Activated CD8-positive, alpha-beta T cell treated with anti-CD3 and anti-CD28 coated beads for 36 hours (primary cell): ENCODE measurements at regions of chr10 and their contacts with region 1.

Region 1: DNA sequence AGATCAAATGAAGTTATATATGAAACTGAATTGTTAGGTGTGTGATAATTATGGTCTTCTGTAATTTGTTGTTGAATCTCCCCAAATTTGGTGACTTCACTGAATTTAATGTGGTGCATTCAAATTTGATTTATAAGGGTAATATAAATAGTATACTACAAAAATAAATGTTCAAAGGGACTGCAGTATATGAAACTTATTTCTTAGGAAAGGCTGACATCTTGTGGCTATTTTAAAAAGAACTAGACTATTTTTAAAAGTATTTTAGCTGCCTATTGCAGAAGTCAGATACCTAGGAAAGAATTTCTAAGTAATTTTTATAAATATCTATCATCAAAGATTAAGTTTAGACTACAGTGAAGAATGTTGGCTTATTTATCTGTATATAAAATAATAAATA is 36.6 kb downstream of the ATRNL1 start:
- DNase-seq: no peak
- ATAC-seq: no peak
- H3K4me3 Mint-ChIP-seq: no peak overlapping the region
- H3K27ac Mint-ChIP-seq: no peak overlapping the region
- H3K4me1 Mint-ChIP-seq: no peaks in the 10 kb centered on the region
- H3K27me3 Mint-ChIP-seq: peaks cover 7% of the 10 kb centered on the region
- CTCF ChIP-seq: peak; percentile 43

Region 2: GRCh38 chr10:114876602-114877300 is 253.0 kb before region 1 on chr10:
- CTCF ChIA-PET with region 1: interaction called, 14 read pairs
- POLR2A ChIA-PET with region 1: no interaction called
- intact Hi-C with region 1: loop called (anchors 2 kb)
- DNase-seq: peak; percentile 73
- ATAC-seq: peak; percentile 81
- H3K4me3 Mint-ChIP-seq: no peak overlapping the region
- H3K27ac Mint-ChIP-seq: no peak overlapping the region
- H3K4me1 Mint-ChIP-seq: peaks cover 10% of the 10 kb centered on the region
- H3K27me3 Mint-ChIP-seq: peaks cover 36% of the 10 kb centered on the region
- CTCF ChIP-seq: no peak

Region 3: GRCh38 chr10:115052226-115052625 is 77.5 kb before region 1 on chr10:
- CTCF ChIA-PET with region 1: no interaction called
- POLR2A ChIA-PET with region 1: no interaction called
- intact Hi-C with region 1: no loop called
- DNase-seq: no peak
- ATAC-seq: no peak
- H3K4me3 Mint-ChIP-seq: no peak overlapping the region
- H3K27ac Mint-ChIP-seq: no peak overlapping the region
- H3K4me1 Mint-ChIP-seq: no peaks in the 10 kb centered on the region
- H3K27me3 Mint-ChIP-seq: no peaks in the 10 kb centered on the region
- CTCF ChIP-seq: no peak